GM12878 (cell line): ENCODE measurements at regions of chr15 and their contacts with region 1.

Region 1: DNA sequence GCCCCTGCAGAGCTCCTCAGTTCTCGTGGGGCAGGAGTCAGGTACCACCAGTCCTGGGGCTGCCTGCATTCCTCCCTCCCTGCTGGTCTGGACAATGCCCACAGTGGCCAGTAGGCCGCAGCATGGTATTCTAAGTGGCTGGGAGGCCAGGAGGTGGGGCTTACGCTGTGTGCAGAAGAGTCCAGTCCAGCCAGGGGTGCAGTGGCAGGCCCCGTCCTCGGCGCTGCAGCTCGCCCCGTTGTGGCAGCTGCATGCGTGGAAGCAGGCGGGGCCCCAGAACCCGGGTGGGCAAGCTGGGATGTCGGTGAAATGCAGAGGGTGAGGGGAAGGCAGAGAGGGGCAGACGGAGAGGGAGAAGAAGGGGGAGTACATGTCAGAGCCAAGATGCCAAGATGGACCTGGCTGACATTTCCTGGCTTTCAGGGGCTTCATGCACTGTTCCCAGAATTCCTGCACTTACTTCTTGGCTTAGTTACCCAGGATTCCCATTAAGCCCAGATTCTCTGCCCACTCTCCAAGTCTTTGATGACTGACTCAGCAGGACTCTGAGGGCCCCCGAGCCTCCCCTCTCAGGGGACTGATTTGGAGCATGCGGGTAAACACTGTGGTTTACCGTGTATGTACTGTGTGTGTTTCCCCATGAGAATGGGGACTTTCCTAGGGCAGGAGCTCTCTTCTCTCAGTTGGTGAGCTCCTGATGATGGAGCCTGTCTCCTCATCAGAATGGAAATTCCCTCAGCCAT is 47.5 kb downstream of the RAB11A start:
- DNase-seq: peak; percentile 84
- ATAC-seq: peak; percentile 85
- H3K4me3 ChIP-seq: 0 out of 2 replicates have a peak overlapping the region, but pooled peaks have one; percentile 13
- H3K27ac ChIP-seq: peak overlapping the region; percentile 85
- H3K4me1 ChIP-seq: peaks cover 67% of the 10 kb centered on the region
- H3K27me3 ChIP-seq: no peaks in the 10 kb centered on the region
- CTCF ChIP-seq: peak; percentile 69 to 97 (median 90); a peak in 5 of 6 replicates
- EP300 ChIP-seq: peak; percentile 79 to 90; a peak in 3 of 4 replicates
- POLR2A ChIP-seq: 0 out of 2 replicates have a peak, but pooled peaks have one; percentile 13
- RAD21 ChIP-seq: peak; percentile 90

Region 2: DNA sequence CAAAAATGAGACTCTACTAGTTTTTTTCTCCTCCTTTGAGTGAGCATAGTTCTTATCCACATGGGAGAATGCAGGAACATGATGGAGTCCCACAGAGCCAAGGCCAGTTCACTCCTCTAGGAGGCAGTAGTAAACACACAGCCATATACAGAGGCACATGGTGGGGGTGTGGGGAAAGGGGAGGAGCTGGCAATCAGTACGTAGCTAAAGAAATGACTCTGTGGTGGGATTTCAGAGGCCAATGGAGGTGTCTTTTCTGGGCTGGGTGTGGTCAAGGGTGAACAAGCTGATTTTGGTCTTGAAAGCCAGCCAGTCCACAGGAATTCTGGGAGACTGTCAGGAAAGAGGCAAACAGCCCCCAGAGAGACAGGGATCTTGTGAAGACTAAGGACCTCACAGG is 54.2 kb before region 1 on chr15:
- CTCF ChIA-PET with region 1: interaction called, 10 read pairs
- POLR2A ChIA-PET with region 1: no interaction called
- RAD21 ChIA-PET with region 1: interaction called, 5 read pairs
- SMC1A ChIA-PET with region 1: interaction called, 6 read pairs
- in situ Hi-C with region 1: no loop called
- intact Hi-C with region 1: no loop called
- DNase-seq: no peak
- ATAC-seq: peak; percentile 97
- H3K4me3 ChIP-seq: no peak overlapping the region
- H3K27ac ChIP-seq: no peak overlapping the region
- H3K4me1 ChIP-seq: peaks cover 13% of the 10 kb centered on the region
- H3K27me3 ChIP-seq: no peaks in the 10 kb centered on the region
- CTCF ChIP-seq: peak; percentile 38 to 64 (median 54); a peak in 5 of 6 replicates
- EP300 ChIP-seq: no peak
- POLR2A ChIP-seq: no peak
- RAD21 ChIP-seq: peak; percentile 54

Region 3: DNA sequence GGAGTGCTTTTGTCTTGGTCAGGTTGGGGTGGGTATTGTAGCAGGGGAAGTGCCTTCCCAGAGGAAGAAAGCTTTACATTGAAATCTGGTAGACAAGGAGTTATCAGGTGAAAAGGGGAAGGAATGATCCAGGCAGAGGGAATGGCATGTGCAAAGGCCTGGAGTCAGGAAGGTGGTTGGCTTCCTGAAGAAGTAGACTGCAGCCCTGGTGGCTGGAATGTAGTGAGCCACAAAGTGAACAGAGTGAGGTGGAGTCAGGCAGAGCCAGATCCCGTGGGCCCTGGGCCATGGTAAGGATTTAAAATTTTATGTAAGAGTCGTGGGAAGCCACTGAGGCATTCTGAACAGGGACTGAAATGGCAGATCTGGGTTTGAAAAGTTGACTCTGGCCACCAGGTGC is 10.7 kb after region 1 on chr15:
- CTCF ChIA-PET with region 1: interaction called, 25 read pairs
- POLR2A ChIA-PET with region 1: interaction called, 20 read pairs
- RAD21 ChIA-PET with region 1: interaction called, 61 read pairs
- SMC1A ChIA-PET with region 1: interaction called, 65 read pairs
- in situ Hi-C with region 1: no loop called
- intact Hi-C with region 1: no loop called
- DNase-seq: no peak
- ATAC-seq: no peak
- H3K4me3 ChIP-seq: no peak overlapping the region
- H3K27ac ChIP-seq: no peak overlapping the region
- H3K4me1 ChIP-seq: no peaks in the 10 kb centered on the region
- H3K27me3 ChIP-seq: no peaks in the 10 kb centered on the region
- CTCF ChIP-seq: no peak
- EP300 ChIP-seq: no peak
- POLR2A ChIP-seq: no peak
- RAD21 ChIP-seq: no peak

Region 4: GRCh38 chr15:65962187-65962586 is 45.4 kb after region 1 on chr15:
- CTCF ChIA-PET with region 1: interaction called, 11 read pairs
- POLR2A ChIA-PET with region 1: no interaction called
- RAD21 ChIA-PET with region 1: interaction called, 12 read pairs
- SMC1A ChIA-PET with region 1: interaction called, 8 read pairs
- in situ Hi-C with region 1: no loop called
- intact Hi-C with region 1: no loop called
- DNase-seq: no peak
- ATAC-seq: no peak
- H3K4me3 ChIP-seq: no peak overlapping the region
- H3K27ac ChIP-seq: no peak overlapping the region
- H3K4me1 ChIP-seq: no peaks in the 10 kb centered on the region
- H3K27me3 ChIP-seq: no peaks in the 10 kb centered on the region
- CTCF ChIP-seq: 0 out of 6 replicates have a peak, but pooled peaks of 1 of the 3 experiments have one; percentile 13
- EP300 ChIP-seq: no peak
- POLR2A ChIP-seq: no peak
- RAD21 ChIP-seq: peak; percentile 21; the same call in 1 of the 2 replicates

Region 5: DNA sequence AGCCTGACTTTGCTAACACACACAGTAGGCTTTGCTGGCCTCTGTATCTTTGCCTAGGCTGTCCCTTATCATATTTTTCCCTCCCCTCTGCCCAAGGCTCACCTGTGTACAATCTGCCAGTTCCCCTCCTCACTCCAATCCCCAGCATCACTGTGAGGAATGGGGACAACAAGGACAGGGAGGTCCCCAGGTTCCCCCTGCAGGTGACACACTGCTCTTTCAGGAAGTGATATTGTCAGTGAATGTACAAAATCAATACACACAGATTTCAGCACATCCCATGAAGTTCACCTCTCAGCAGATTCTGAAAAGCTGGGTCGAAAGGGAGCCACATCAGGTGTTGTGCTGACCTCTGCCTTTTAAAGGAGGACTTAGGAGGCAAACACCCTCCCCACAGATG is 129.9 kb after region 1 on chr15:
- CTCF ChIA-PET with region 1: interaction called, 4 read pairs
- POLR2A ChIA-PET with region 1: no interaction called
- RAD21 ChIA-PET with region 1: interaction called, 4 read pairs
- SMC1A ChIA-PET with region 1: interaction called, 10 read pairs
- in situ Hi-C with region 1: no loop called
- intact Hi-C with region 1: no loop called
- DNase-seq: no peak
- ATAC-seq: peak; percentile 72
- H3K4me3 ChIP-seq: no peak overlapping the region
- H3K27ac ChIP-seq: no peak overlapping the region
- H3K4me1 ChIP-seq: no peaks in the 10 kb centered on the region
- H3K27me3 ChIP-seq: peaks cover 0 to 1% of the 10 kb centered on the region in 2 experiments; a peak in 1 of 4 replicates
- CTCF ChIP-seq: peak; percentile 35 to 39 (median 37); a peak in 4 of 6 replicates
- EP300 ChIP-seq: no peak
- POLR2A ChIP-seq: no peak
- RAD21 ChIP-seq: peak; percentile 41; the same call in 1 of the 2 replicates

Region 6: DNA sequence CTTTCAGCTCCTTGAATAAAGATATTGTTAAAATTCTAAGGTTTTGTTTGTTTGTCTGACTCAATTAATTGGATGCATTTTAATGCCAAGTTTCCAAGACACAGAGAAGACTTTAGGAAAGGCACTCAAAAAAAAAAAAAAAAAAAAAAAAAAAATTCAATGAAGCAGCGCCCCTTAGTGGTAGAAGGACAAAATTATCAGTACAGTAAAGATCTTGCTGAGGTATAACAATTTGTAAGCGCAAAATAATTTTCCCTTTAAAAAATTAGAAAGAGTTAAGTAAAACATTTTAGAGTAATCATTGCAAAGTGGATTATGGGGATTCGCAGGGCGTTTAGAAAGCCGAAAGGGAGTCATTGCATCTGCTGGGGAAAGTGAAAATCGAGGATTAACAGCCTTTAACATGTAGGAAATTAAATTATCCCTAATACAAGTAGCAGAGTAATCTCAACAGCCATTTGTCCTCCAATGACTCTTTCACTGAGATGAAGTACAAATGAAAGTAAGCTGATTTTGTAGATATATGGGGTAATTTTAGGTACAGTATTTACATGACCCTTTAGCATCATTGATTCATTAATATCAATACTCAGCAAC is 370.7 kb after region 1 on chr15:
- CTCF ChIA-PET with region 1: interaction called, 11 read pairs
- POLR2A ChIA-PET with region 1: no interaction called
- RAD21 ChIA-PET with region 1: interaction called, 7 read pairs
- SMC1A ChIA-PET with region 1: interaction called, 10 read pairs
- in situ Hi-C with region 1: no loop called
- intact Hi-C with region 1: loop called (anchors 2 kb)
- DNase-seq: no peak
- ATAC-seq: peak; percentile 34; the same call in 2 of the 3 replicates
- H3K4me3 ChIP-seq: no peak overlapping the region
- H3K27ac ChIP-seq: no peak overlapping the region
- H3K4me1 ChIP-seq: no peaks in the 10 kb centered on the region; the same call in 1 of the 2 replicates
- H3K27me3 ChIP-seq: no peaks in the 10 kb centered on the region
- CTCF ChIP-seq: peak; percentile 42 to 56 (median 51)
- EP300 ChIP-seq: no peak
- POLR2A ChIP-seq: no peak
- RAD21 ChIP-seq: peak; percentile 59

Region 7: GRCh38 chr15:66362776-66363175 is 445.9 kb after region 1 on chr15:
- CTCF ChIA-PET with region 1: no interaction called
- POLR2A ChIA-PET with region 1: no interaction called
- RAD21 ChIA-PET with region 1: no interaction called
- SMC1A ChIA-PET with region 1: no interaction called
- in situ Hi-C with region 1: no loop called
- intact Hi-C with region 1: no loop called
- DNase-seq: no peak
- ATAC-seq: no peak
- H3K4me3 ChIP-seq: no peak overlapping the region
- H3K27ac ChIP-seq: no peak overlapping the region
- H3K4me1 ChIP-seq: peaks cover 8% of the 10 kb centered on the region
- H3K27me3 ChIP-seq: no peaks in the 10 kb centered on the region
- CTCF ChIP-seq: no peak
- EP300 ChIP-seq: no peak
- POLR2A ChIP-seq: no peak
- RAD21 ChIP-seq: no peak